Ovary (tissue), 10 donors: ENCODE measurements at regions of chr18 and their contacts with region 1.

Region 1: DNA sequence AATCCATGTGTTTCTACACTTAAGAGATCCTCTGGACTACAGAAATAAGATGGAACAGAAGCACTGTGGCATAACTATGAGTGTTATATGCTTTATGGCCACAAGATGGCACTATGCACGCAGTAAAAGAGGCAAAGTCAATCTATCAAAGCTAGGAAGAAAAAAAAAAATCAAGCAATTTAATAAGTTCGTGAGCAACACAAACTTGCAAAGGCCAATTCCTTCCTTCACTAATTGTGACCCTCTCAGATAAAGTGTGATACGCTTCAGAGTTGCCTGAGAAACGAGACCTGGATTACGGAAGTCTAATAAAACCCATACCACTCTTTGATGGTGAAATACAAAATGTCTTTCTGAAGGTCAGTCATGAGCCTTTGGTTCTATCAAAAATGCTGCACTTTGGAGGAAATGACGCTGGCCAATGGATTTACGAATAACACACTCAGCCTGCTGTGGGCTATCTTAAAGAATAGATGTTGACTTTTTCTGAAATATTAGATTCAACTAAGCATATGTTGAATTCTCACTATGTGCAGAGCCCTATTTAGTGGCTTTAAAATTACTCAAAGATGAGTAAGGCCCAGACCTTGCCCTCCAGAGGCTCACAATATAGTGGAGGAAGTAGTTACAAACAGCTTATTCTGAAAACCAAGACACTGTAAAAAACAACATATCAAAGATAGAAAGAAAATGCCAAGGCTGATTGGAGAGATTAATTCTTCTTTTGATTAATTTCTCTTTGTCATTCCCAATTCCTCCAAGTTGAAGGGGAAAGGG is 35.5 kb upstream of the TTR start:
- DNase-seq: peak in 2 of 5 donors; percentile 18 to 33
- H3K4me3 ChIP-seq: no peak overlapping the region
- H3K27ac ChIP-seq: no peak overlapping the region
- H3K4me1 ChIP-seq: no peaks in the 10 kb centered on the region
- H3K27me3 ChIP-seq: no peaks in the 10 kb centered on the region
- CTCF ChIP-seq: peak; percentile 57 to 68 (median 60)
- EP300 ChIP-seq: no peak
- POLR2A ChIP-seq: no peak

Region 2: GRCh38 chr18:31722369-31722957 is 166.3 kb after region 1 on chr18:
- intact Hi-C with region 1: loop called in 3 of 4 experiments (anchors 5 kb)
- DNase-seq: peak; percentile 53 to 83 (median 75)
- H3K4me3 ChIP-seq: no peak overlapping the region
- H3K27ac ChIP-seq: no peak overlapping the region
- H3K4me1 ChIP-seq: no peaks in the 10 kb centered on the region
- H3K27me3 ChIP-seq: no peaks in the 10 kb centered on the region
- CTCF ChIP-seq: peak; percentile 22 to 73 (median 52)
- EP300 ChIP-seq: no peak
- POLR2A ChIP-seq: no peak

Region 3: GRCh38 chr18:31819925-31820229 is 263.7 kb after region 1 on chr18:
- intact Hi-C with region 1: loop called in 1 of 4 experiments (anchors 5 kb)
- DNase-seq: no peak
- H3K4me3 ChIP-seq: no peak overlapping the region
- H3K27ac ChIP-seq: no peak overlapping the region
- H3K4me1 ChIP-seq: peaks cover 7% of the 10 kb centered on the region
- H3K27me3 ChIP-seq: no peaks in the 10 kb centered on the region
- CTCF ChIP-seq: no peak
- EP300 ChIP-seq: no peak
- POLR2A ChIP-seq: no peak

Region 4: GRCh38 chr18:31977270-31977872 is 421.2 kb after region 1 on chr18:
- intact Hi-C with region 1: loop called in 2 of 4 experiments (anchors 10 kb)
- DNase-seq: peak in 2 of 5 donors; percentile 33 to 41
- H3K4me3 ChIP-seq: no peak overlapping the region
- H3K27ac ChIP-seq: no peak overlapping the region
- H3K4me1 ChIP-seq: no peaks in the 10 kb centered on the region
- H3K27me3 ChIP-seq: no peaks in the 10 kb centered on the region
- CTCF ChIP-seq: peak; percentile 27 to 40 (median 31)
- EP300 ChIP-seq: no peak
- POLR2A ChIP-seq: no peak